Stomach (tissue), 19 donors: ENCODE measurements at regions of chr18 and their contacts with region 1.

Region 1: GRCh38 chr18:59402432-59403090 is 43.5 kb upstream of the LMAN1 start:
- DNase-seq: peak; percentile 85 to 91
- H3K4me3 ChIP-seq: no peak overlapping the region
- H3K27ac ChIP-seq: no peak overlapping the region
- H3K4me1 ChIP-seq: no peaks in the 10 kb centered on the region
- H3K27me3 ChIP-seq: no peaks in the 10 kb centered on the region
- CTCF ChIP-seq: peak in 5 of 7 experiments; percentile 80 to 99 (median 91)
- EP300 ChIP-seq: no peak
- POLR2A ChIP-seq: no peak

Region 2: DNA sequence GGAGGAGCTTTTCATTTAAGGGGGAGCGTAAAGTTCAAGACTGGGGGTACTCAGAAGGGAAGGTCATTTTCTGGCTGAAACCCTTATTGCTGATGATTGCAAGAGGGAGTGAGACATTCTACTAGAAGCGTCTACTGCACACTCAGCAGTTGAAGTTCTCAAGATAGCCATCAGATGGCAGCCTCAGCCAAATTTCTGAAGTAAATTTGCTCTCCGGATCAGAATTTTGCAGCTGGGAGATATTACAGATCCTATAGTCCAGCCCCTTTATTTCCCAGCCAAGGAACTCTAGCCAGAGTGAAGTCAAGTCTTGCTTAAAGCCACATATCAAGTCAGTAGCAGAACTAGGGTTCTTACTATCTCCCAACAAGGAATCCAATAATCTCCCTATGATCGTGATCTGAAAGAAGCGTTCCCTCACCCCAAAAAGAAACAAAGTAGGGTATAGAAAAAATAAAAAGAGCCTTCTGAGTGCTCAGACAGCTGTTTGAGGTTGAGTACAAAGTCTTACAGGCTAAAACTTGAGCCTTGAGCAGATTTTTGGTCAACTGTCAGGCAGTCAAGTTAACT is 153.3 kb before region 1 on chr18:
- intact Hi-C with region 1: loop called (anchors 5 kb)
- DNase-seq: peak in 1 of 2 donors; percentile 92
- H3K4me3 ChIP-seq: no peak overlapping the region
- H3K27ac ChIP-seq: no peak overlapping the region
- H3K4me1 ChIP-seq: no peaks in the 10 kb centered on the region
- H3K27me3 ChIP-seq: peaks cover 0 to 36% (median 12%) of the 10 kb centered on the region in 3 donors
- CTCF ChIP-seq: peak in 5 of 7 experiments; percentile 29 to 70 (median 56)
- EP300 ChIP-seq: no peak
- POLR2A ChIP-seq: no peak

Region 3: GRCh38 chr18:59308248-59308937 is 94.2 kb before region 1 on chr18:
- intact Hi-C with region 1: loop called (anchors 5 kb)
- DNase-seq: peak; percentile 81 to 91
- H3K4me3 ChIP-seq: peak overlapping the region; percentile 13 to 46 (median 26)
- H3K27ac ChIP-seq: no peak overlapping the region
- H3K4me1 ChIP-seq: peaks cover 0 to 12% (median 10%) of the 10 kb centered on the region in 4 donors
- H3K27me3 ChIP-seq: peaks cover 0 to 74% (median 22%) of the 10 kb centered on the region in 3 donors
- CTCF ChIP-seq: peak in 5 of 7 experiments; percentile 66 to 90 (median 82)
- EP300 ChIP-seq: no peak
- POLR2A ChIP-seq: no peak